Panc1 (cell line): ENCODE measurements at regions of chr7 and their contacts with region 1.

Region 1: DNA sequence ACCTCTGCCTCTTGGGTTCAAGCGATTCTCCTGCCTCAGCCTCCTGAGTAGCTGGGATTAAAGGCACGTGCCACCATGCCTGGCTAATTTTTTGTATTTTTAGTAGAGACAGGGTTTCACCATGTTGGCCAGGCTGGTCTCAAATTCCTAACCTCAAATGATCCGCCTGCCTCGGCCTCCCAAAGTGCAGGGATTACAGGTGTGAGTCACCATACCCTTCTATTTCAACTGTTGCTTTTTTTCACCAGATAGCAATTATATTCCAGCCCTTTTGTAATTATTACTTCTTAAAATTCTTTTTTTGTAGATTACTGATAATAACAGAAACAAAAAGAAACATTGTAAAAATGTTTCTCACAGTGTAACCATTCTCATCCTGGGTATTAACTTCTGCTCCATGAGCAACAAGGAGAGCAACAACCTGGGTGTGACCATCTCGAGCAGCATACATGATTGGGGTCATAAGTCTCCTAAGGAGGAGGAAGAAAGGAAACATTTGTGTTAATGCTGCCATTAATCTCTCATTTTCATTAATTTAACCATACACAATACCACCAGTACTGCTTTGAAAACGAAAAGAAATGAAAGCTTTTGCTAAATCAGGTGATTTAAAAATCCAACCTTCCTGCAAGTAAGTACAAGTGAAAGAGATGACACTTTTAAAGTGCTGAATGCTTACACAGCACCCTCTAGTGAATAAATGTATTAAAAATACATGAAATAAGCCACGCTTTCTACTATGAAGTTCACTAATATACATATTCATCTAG is 41.8 kb downstream of the ASZ1 start:
- DNase-seq: peak; percentile 24
- ATAC-seq: peak; percentile 83
- H3K4me3 ChIP-seq: no peak overlapping the region
- H3K27ac ChIP-seq: 0 out of 2 replicates have a peak overlapping the region, but pooled peaks have one; percentile 26
- H3K4me1 ChIP-seq: peaks cover 2% of the 10 kb centered on the region; the same call in 1 of the 2 replicates
- H3K27me3 ChIP-seq: no peaks in the 10 kb centered on the region; the same call in 1 of the 2 replicates
- CTCF ChIP-seq: peak; percentile 62; the same call in 1 of the 2 replicates

Region 2: GRCh38 chr7:116929914-116930913 is 455.3 kb before region 1 on chr7:
- CTCF ChIA-PET with region 1: no interaction called
- POLR2A ChIA-PET with region 1: no interaction called
- in situ Hi-C with region 1: no loop called
- intact Hi-C with region 1: loop called (anchors 5 kb)
- DNase-seq: peak; percentile 79
- ATAC-seq: peak; percentile 95
- H3K4me3 ChIP-seq: peak overlapping the region in 1 of 2 experiments; percentile 25; a peak in 1 of 4 replicates
- H3K27ac ChIP-seq: no peak overlapping the region
- H3K4me1 ChIP-seq: 0 out of 2 replicates have a peak, but pooled peaks cover 2% of the 10 kb centered on the region
- H3K27me3 ChIP-seq: no peaks in the 10 kb centered on the region
- CTCF ChIP-seq: peak; percentile 93

Region 3: DNA sequence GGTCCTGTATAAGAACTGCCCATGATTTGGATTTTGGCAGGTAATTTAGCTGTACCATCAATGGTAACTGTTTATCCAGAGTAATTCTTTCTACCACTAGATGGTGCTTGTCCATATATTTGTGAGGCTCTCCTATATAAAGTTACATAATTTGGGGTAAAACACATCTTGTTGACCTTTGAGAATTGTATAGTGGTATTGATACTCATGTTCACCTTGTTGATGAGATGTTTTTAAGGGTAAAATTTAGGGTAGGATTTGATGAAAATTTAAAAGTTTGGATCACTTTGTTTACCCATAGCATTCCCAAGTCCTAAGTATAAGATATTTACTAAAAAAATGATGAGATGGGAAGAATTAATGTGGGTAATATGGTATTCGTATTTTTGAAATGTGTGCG is 400.6 kb before region 1 on chr7:
- CTCF ChIA-PET with region 1: no interaction called
- POLR2A ChIA-PET with region 1: no interaction called
- in situ Hi-C with region 1: no loop called
- intact Hi-C with region 1: loop called (anchors 5 kb)
- DNase-seq: no peak
- ATAC-seq: peak; percentile 79
- H3K4me3 ChIP-seq: no peak overlapping the region
- H3K27ac ChIP-seq: no peak overlapping the region
- H3K4me1 ChIP-seq: no peaks in the 10 kb centered on the region; the same call in 1 of the 2 replicates
- H3K27me3 ChIP-seq: no peaks in the 10 kb centered on the region
- CTCF ChIP-seq: peak; percentile 77; the same call in 1 of the 2 replicates

Region 4: DNA sequence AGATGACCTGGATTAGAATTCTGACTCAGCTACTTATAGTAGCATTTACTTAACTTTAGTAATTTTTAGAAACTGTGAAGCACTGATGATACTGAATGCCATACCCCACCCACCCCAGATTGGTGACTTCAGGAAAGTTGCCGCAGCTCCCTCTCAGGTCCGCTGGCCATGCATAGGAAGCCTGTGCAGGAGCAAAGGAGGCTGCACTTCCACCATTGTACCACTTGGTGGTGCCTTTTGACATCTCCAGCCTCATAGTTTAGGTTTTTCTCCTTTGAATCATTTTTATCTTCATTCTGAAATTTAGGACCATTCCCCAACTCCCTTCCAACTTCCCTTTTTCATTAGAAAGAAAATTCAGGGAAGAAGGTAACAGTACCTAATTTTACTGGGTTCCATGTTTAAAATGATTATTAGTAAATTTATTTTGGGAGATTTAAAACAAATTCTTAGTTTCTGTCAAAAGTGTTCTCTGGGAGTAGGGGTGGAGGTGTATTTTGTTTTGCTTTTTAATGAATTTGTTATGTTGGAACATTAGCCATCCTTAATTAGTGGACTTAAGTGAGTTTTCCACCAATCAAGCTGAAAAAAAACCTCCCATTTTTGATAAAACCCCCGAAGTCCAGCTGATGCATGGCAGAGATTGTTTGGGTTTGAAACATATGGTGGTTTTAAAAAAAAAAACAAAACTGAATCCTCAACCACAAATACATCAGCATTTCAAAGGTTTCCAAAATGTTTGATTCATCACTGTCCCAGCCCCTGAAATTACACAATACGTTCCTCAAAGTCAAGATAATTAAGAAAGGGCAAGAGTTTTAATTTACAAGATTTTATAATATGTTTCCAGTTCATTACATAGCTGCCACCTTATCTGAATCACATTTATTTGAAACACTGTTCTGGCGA is 172.3 kb before region 1 on chr7:
- CTCF ChIA-PET with region 1: no interaction called
- POLR2A ChIA-PET with region 1: no interaction called
- in situ Hi-C with region 1: no loop called
- intact Hi-C with region 1: loop called (anchors 2 kb)
- DNase-seq: peak; percentile 60
- ATAC-seq: peak; percentile 82
- H3K4me3 ChIP-seq: no peak overlapping the region
- H3K27ac ChIP-seq: no peak overlapping the region
- H3K4me1 ChIP-seq: no peaks in the 10 kb centered on the region; the same call in 1 of the 2 replicates
- H3K27me3 ChIP-seq: no peaks in the 10 kb centered on the region
- CTCF ChIP-seq: peak; percentile 91

Region 5: GRCh38 chr7:117338020-117338419 is 47.5 kb before region 1 on chr7:
- CTCF ChIA-PET with region 1: no interaction called
- POLR2A ChIA-PET with region 1: no interaction called
- in situ Hi-C with region 1: no loop called
- intact Hi-C with region 1: no loop called
- DNase-seq: no peak
- ATAC-seq: peak; percentile 66; the same call in 1 of the 2 replicates
- H3K4me3 ChIP-seq: no peak overlapping the region
- H3K27ac ChIP-seq: no peak overlapping the region
- H3K4me1 ChIP-seq: no peaks in the 10 kb centered on the region
- H3K27me3 ChIP-seq: no peaks in the 10 kb centered on the region; the same call in 1 of the 2 replicates
- CTCF ChIP-seq: peak; percentile 9; the same call in 1 of the 2 replicates